ENCODE measurements at regions of chr19 and their contacts with region 1.

Region 1: DNA sequence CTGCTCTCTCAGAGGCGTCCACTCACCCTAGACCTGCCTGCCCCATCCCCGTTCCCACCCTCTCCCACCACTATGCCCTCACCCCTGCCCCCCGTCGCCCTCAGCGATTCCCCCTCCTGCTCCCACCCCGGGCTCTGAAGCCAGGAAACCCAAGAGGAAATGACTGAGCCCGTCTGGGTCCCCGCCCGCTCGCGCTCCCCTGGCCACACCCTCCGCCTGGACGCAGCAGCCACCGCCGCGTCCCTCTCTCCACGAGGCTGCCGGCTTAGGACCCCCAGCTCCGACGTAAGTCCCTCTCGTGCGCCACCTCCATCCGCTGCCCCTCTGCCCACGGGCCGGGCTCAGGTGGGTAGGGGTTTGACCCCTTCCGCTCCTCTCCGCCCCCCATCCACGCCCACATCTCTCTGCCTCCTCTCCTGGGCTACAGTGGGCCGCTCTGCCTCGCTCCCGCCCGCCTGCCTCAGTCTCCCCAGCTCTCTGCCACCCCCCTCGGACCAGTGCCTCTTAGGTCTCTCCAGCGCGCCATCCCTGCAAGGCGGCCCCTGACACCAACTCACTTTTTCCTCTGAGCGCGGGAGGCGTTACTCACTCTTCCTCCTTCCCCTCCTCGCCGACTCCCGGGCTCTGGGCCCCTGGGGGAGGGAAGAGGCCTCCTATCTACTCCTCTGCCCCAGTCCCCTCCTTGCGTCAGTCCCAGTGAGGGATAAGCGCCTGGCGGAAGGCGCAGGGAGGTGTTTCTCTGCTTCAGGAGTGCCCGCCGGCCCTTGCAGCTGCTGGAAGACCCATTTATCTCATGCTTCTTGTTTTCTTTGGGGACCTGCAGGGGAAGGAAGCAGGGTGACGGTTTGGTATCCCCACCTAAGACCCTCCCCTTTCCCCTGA is at the start of gene FXYD5:
- H3K4me3 ChIP-seq: peak within 1 kb of the TSS; percentile 57
- H3K27ac ChIP-seq: peak within 1 kb of the TSS; percentile 75; the same call in 1 of the 2 replicates
- H3K4me1 ChIP-seq: peaks cover 20% of the 10 kb centered on the region
- CTCF ChIP-seq: peak; percentile 87

Region 2: GRCh38 chr19:35098413-35099049 is 56.2 kb before region 1 on chr19:
- CTCF ChIA-PET with region 1: no interaction called
- POLR2A ChIA-PET with region 1: no interaction called
- H3K4me3 ChIP-seq: no peak overlapping the region
- H3K27ac ChIP-seq: no peak overlapping the region
- H3K4me1 ChIP-seq: no peaks in the 10 kb centered on the region
- CTCF ChIP-seq: no peak

Region 3: GRCh38 chr19:35168207-35168606 is 13.4 kb after region 1 on chr19:
- CTCF ChIA-PET with region 1: interaction called, 10 read pairs
- POLR2A ChIA-PET with region 1: interaction called, 5 read pairs
- H3K4me3 ChIP-seq: no peak overlapping the region
- H3K27ac ChIP-seq: no peak overlapping the region
- H3K4me1 ChIP-seq: no peaks in the 10 kb centered on the region
- CTCF ChIP-seq: no peak